MCF 10A (cell line): ENCODE measurements at regions of chr5 and their contacts with region 1.

Region 1: DNA sequence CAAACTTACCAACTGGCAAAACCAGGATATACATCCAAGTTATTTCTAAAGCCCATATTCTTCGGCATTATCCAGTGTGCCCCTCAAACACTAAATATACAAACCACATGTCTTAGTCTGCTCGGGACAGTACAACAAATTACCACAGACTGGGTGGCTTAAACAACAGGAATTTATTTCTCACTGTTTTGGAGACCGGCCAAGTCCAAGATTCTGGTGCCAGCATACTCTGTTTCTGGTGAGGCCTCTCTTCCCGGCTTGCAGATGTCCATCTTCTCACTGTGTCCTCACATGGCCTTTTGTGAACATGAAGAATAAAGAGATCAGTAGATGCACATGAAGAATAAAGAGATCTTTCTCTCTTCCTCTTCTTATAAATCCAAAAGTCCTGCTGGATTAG is 12.9 kb upstream of the SLCO6A1 start:
- DNase-seq: peak; percentile 48
- H3K4me3 Mint-ChIP-seq: no peak overlapping the region
- H3K27ac Mint-ChIP-seq: no peak overlapping the region
- H3K4me1 Mint-ChIP-seq: peaks cover 10% of the 10 kb centered on the region
- H3K27me3 Mint-ChIP-seq: no peaks in the 10 kb centered on the region
- CTCF ChIP-seq: no peak

Region 2: GRCh38 chr5:102453716-102454115 is 58.0 kb before region 1 on chr5:
- CTCF ChIA-PET with region 1: interaction called, 11 read pairs
- POLR2A ChIA-PET with region 1: no interaction called
- intact Hi-C with region 1: no loop called
- DNase-seq: peak; percentile 11
- H3K4me3 Mint-ChIP-seq: peak overlapping the region; percentile 38
- H3K27ac Mint-ChIP-seq: no peak overlapping the region
- H3K4me1 Mint-ChIP-seq: peaks cover 3% of the 10 kb centered on the region
- H3K27me3 Mint-ChIP-seq: no peaks in the 10 kb centered on the region
- CTCF ChIP-seq: no peak

Region 3: GRCh38 chr5:102523541-102524175 is 12.0 kb after region 1 on chr5:
- CTCF ChIA-PET with region 1: interaction called, 18 read pairs
- POLR2A ChIA-PET with region 1: no interaction called
- intact Hi-C with region 1: no loop called
- DNase-seq: no peak
- H3K4me3 Mint-ChIP-seq: no peak overlapping the region
- H3K27ac Mint-ChIP-seq: no peak overlapping the region
- H3K4me1 Mint-ChIP-seq: no peaks in the 10 kb centered on the region
- H3K27me3 Mint-ChIP-seq: peaks cover 8% of the 10 kb centered on the region
- CTCF ChIP-seq: no peak

Region 4: GRCh38 chr5:102628441-102629175 is 116.9 kb after region 1 on chr5:
- CTCF ChIA-PET with region 1: no interaction called
- POLR2A ChIA-PET with region 1: no interaction called
- intact Hi-C with region 1: no loop called
- DNase-seq: peak; percentile 15
- H3K4me3 Mint-ChIP-seq: no peak overlapping the region
- H3K27ac Mint-ChIP-seq: no peak overlapping the region
- H3K4me1 Mint-ChIP-seq: peaks cover 4% of the 10 kb centered on the region
- H3K27me3 Mint-ChIP-seq: no peaks in the 10 kb centered on the region
- CTCF ChIP-seq: no peak